ENCODE measurements at regions of chr14 and their contacts with region 1.

Region 1: DNA sequence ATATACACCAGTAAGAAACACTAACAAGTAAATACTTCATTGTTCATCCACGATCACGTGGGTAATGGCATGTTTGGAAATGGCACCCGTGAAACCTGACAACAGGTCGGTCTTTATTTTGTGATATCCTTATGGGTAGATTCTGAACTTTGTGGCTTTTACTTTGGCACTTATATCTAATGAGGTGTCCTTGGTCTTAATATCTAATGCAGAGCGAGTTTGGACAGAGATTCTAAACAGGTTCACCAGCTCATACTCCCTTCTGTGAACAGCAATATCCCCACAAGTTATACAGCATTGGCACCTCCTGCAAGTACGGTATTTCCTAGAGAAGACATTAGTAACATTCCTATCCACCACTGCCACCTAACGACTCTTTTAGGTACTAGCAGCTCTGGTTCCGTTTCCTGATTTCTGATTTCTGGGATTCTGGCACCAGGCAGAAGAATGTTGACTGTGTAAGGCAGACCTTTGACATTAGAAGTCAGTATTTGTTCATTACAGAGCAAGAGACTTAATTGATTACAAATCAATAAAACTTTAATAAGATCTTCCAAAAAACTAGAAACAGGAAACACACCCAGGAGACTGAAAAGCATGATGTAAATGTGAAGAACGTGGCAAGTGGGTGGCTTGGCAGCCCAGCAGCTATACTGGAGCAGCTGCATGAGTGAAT is 2.4 kb downstream of the ANG start:
- DNase-seq: no peak
- ATAC-seq: peak; percentile 96
- H3K4me3 Mint-ChIP-seq: no peak overlapping the region
- H3K27ac Mint-ChIP-seq: no peak overlapping the region
- H3K4me1 Mint-ChIP-seq: peaks cover 5% of the 10 kb centered on the region
- H3K27me3 Mint-ChIP-seq: no peaks in the 10 kb centered on the region
- CTCF ChIP-seq: peak; percentile 89

Region 2: DNA sequence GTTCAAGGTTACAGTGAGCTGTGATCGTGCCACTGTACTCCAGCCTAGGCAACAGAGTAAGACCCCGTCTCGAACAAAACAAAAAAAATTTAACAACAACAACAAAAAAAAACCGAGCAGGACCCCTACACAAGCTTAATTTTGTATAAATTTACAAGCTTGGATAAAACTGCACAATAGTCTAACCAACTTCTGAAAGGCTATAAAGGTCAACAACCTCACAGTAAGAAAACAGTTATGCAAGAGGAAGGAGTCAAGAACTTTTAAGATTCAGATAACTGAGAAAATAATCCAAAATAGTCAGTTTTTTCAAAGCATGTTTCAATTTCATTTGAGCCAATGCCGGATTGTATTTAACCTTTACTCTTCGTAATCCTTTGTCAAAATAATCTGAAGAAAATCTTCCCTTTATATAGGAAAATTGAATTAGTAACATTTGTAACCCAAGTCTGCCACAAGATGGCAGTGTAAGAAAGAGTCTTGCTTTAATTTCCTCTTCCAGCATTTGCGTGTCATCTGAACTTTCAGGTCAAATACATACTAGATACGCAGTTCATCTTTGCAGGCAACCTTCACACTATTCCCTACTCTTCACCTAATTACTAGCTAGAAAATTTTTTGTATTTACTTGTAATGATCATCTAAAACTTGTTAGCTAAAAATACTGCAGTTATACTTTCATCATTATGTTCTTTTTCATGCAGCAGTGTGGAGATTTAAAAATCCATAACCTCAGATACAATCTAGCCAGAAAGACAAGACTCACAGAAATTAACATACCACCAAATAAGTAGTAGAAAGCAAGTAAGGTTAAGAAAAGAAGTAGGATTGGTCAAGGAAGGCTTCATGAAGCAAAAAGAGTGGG is 363.7 kb before region 1 on chr14:
- CTCF ChIA-PET with region 1: interaction called, 42 read pairs
- POLR2A ChIA-PET with region 1: no interaction called
- intact Hi-C with region 1: loop called (anchors 1 kb)
- DNase-seq: no peak
- ATAC-seq: peak; percentile 49
- H3K4me3 Mint-ChIP-seq: no peak overlapping the region
- H3K27ac Mint-ChIP-seq: peak overlapping the region; percentile 42
- H3K4me1 Mint-ChIP-seq: peaks cover 26% of the 10 kb centered on the region
- H3K27me3 Mint-ChIP-seq: no peaks in the 10 kb centered on the region
- CTCF ChIP-seq: no peak

Region 3: GRCh38 chr14:20636999-20637398 is 54.0 kb before region 1 on chr14:
- CTCF ChIA-PET with region 1: no interaction called
- POLR2A ChIA-PET with region 1: no interaction called
- intact Hi-C with region 1: no loop called
- DNase-seq: no peak
- ATAC-seq: no peak
- H3K4me3 Mint-ChIP-seq: no peak overlapping the region
- H3K27ac Mint-ChIP-seq: no peak overlapping the region
- H3K4me1 Mint-ChIP-seq: peaks cover 20% of the 10 kb centered on the region
- H3K27me3 Mint-ChIP-seq: peaks cover 23% of the 10 kb centered on the region
- CTCF ChIP-seq: no peak

Region 4: GRCh38 chr14:20652996-20653975 is 37.7 kb before region 1 on chr14:
- CTCF ChIA-PET with region 1: interaction called, 17 read pairs
- POLR2A ChIA-PET with region 1: no interaction called
- intact Hi-C with region 1: no loop called
- DNase-seq: no peak
- ATAC-seq: no peak
- H3K4me3 Mint-ChIP-seq: peak overlapping the region; percentile 58
- H3K27ac Mint-ChIP-seq: no peak overlapping the region
- H3K4me1 Mint-ChIP-seq: peaks cover 14% of the 10 kb centered on the region
- H3K27me3 Mint-ChIP-seq: peaks cover 50% of the 10 kb centered on the region
- CTCF ChIP-seq: no peak

Region 5: DNA sequence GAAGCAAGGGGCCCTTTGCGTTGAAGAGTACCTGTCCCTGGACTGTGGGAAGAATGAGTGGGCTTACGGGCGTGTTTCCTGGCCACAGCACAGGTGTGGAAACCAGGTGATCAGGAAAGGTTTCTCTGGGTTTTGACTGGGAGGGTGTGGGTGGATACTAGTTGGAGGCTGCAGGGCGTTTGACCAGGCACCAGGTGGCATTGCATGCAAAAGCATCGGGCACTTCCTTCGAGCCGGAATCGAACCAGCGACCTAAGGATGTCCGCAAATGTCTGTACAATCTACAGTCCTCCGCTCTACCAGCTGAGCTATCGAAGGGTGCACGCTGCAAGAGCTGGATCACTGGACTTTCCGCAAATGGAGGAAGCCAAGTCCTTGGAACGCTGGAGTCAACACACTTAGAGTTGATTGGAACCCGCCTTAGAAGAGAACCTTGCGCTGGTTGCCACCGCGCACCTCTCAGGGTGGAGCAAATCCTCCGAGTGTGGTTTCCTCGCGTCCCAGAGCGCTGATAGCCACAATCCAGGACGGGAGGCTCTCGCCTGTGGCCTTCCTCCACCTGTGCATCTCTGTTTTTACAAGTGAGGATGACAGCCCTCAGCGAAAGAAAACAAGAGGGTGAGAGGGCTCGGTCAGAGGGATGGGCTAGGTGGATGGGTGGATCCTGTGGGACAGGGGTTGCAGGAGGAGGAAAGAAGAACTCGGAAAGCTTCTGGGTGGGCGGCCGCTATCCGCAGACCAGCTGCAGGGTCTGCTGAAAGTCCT is 27.8 kb before region 1 on chr14:
- CTCF ChIA-PET with region 1: interaction called, 95 read pairs
- POLR2A ChIA-PET with region 1: interaction called, 22 read pairs
- intact Hi-C with region 1: loop called (anchors 1 kb)
- DNase-seq: peak; percentile 67
- ATAC-seq: peak; percentile 85
- H3K4me3 Mint-ChIP-seq: peak overlapping the region; percentile 87
- H3K27ac Mint-ChIP-seq: peak overlapping the region; percentile 67
- H3K4me1 Mint-ChIP-seq: peaks cover 53% of the 10 kb centered on the region
- H3K27me3 Mint-ChIP-seq: no peaks in the 10 kb centered on the region
- CTCF ChIP-seq: no peak

Region 6: DNA sequence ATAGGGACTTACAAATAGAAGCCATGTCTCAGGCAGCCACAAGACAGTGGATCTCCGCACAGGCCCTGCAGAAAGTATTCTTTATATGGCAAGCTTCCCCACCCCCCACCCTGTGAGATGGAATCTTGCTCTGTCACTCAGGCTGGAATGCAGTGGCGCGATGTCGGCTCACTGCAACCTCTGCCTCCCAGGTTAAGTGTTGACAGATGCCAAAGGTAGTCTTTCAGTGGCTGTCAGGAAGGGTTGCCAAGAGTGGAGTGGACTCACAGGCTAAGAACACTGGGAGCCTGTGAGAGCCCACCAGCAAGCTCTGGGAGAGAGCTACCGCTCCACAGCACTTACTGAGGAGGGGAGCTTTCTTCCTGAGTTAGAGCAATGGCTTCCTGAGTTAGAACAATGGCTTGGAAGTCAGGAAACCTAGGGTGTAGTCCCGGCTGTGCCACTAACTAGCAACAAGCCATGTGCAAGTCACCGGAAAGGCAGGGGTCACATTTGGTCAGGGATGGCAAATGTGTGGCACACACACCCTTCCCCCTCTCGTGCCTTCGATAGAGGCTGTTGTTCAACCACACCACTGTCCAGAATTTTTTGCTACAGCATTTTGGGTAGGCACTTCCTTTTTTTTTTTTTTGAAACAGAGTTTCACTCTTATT is 109.0 kb after region 1 on chr14:
- CTCF ChIA-PET with region 1: no interaction called
- POLR2A ChIA-PET with region 1: no interaction called
- intact Hi-C with region 1: no loop called
- DNase-seq: no peak
- ATAC-seq: peak; percentile 45
- H3K4me3 Mint-ChIP-seq: peak overlapping the region; percentile 19
- H3K27ac Mint-ChIP-seq: no peak overlapping the region
- H3K4me1 Mint-ChIP-seq: peaks cover 38% of the 10 kb centered on the region
- H3K27me3 Mint-ChIP-seq: no peaks in the 10 kb centered on the region
- CTCF ChIP-seq: no peak